HEK293 (cell line): ENCODE measurements at regions of chr12 and their contacts with region 1.

Region 1: GRCh38 chr12:125183187-125184067 is 118.2 kb downstream of the AACS start:
- H3K4me3 ChIP-seq: no peak overlapping the region
- H3K27ac ChIP-seq: no peak overlapping the region
- H3K4me1 ChIP-seq: peaks cover 9% of the 10 kb centered on the region
- CTCF ChIP-seq: peak; percentile 97

Region 2: GRCh38 chr12:124700810-124701592 is 482.4 kb before region 1 on chr12:
- CTCF ChIA-PET with region 1: no interaction called
- POLR2A ChIA-PET with region 1: no interaction called
- H3K4me3 ChIP-seq: no peak overlapping the region
- H3K27ac ChIP-seq: no peak overlapping the region
- H3K4me1 ChIP-seq: peaks cover 5% of the 10 kb centered on the region; the same call in 1 of the 2 replicates
- CTCF ChIP-seq: no peak

Region 3: GRCh38 chr12:125092872-125093680 is 90.4 kb before region 1 on chr12:
- CTCF ChIA-PET with region 1: no interaction called
- POLR2A ChIA-PET with region 1: no interaction called
- H3K4me3 ChIP-seq: no peak overlapping the region
- H3K27ac ChIP-seq: no peak overlapping the region
- H3K4me1 ChIP-seq: no peaks in the 10 kb centered on the region
- CTCF ChIP-seq: 0 out of 2 replicates have a peak, but pooled peaks have one; percentile 26

Region 4: GRCh38 chr12:125203145-125203765 is 19.8 kb after region 1 on chr12:
- CTCF ChIA-PET with region 1: interaction called, 24 read pairs
- POLR2A ChIA-PET with region 1: interaction called, 3 read pairs
- H3K4me3 ChIP-seq: no peak overlapping the region
- H3K27ac ChIP-seq: no peak overlapping the region
- H3K4me1 ChIP-seq: no peaks in the 10 kb centered on the region
- CTCF ChIP-seq: peak; percentile 21; the same call in 1 of the 2 replicates

Region 5: GRCh38 chr12:125330645-125331341 is 147.4 kb after region 1 on chr12:
- CTCF ChIA-PET with region 1: interaction called, 18 read pairs
- POLR2A ChIA-PET with region 1: no interaction called
- H3K4me3 ChIP-seq: peak overlapping the region; percentile 9; the same call in 1 of the 2 replicates
- H3K27ac ChIP-seq: no peak overlapping the region
- H3K4me1 ChIP-seq: no peaks in the 10 kb centered on the region
- CTCF ChIP-seq: peak; percentile 77; the same call in 1 of the 2 replicates